ENCODE measurements at regions of chr1 and their contacts with region 1.

Region 1: GRCh38 chr1:156652131-156652991 is 10.4 kb downstream of the BCAN start:
- DNase-seq: peak; percentile 22
- H3K4me3 ChIP-seq: no peak overlapping the region
- H3K27ac ChIP-seq: no peak overlapping the region
- H3K4me1 ChIP-seq: peaks cover 4% of the 10 kb centered on the region
- H3K27me3 ChIP-seq: no peaks in the 10 kb centered on the region
- CTCF ChIP-seq: no peak

Region 2: DNA sequence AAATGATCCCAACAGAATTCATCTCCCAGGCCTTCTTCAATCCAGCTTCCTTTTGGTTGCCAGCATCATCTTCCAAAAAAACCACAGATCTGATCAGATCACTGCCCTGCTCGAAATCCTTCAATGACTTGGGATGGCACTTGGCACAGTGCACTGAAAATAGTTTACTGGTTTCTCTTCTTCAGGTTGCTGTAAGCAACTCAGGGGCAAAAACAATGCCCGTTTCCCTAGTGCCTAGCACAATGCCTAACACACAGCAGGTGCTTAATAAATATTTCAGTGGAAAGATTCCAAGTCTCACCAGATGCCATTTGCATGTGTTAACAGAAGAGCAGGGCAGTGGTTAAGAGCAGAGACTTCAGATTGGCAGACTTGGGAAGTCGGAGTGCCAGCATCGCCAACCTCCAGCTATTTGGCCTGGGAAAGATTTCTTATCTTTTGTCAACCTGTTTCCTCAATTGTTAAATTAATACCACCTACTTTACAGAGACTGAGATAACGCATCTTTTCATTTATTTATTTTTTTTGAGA is 65.0 kb after region 1 on chr1:
- CTCF ChIA-PET with region 1: no interaction called
- dilution Hi-C with region 1: loop called (anchors 5 kb)
- in situ Hi-C with region 1: no loop called
- intact Hi-C with region 1: no loop called
- DNase-seq: no peak
- H3K4me3 ChIP-seq: no peak overlapping the region
- H3K27ac ChIP-seq: no peak overlapping the region
- H3K4me1 ChIP-seq: peaks cover 3% of the 10 kb centered on the region
- H3K27me3 ChIP-seq: no peaks in the 10 kb centered on the region
- CTCF ChIP-seq: no peak

Region 3: GRCh38 chr1:156927215-156928042 is 275.1 kb after region 1 on chr1:
- CTCF ChIA-PET with region 1: no interaction called
- dilution Hi-C with region 1: no loop called
- in situ Hi-C with region 1: no loop called
- intact Hi-C with region 1: no loop called
- DNase-seq: peak; percentile 72
- H3K4me3 ChIP-seq: peak overlapping the region in 2 of 3 experiments; percentile 36 to 49
- H3K27ac ChIP-seq: no peak overlapping the region
- H3K4me1 ChIP-seq: peaks cover 17% of the 10 kb centered on the region
- H3K27me3 ChIP-seq: peaks cover 33% of the 10 kb centered on the region
- CTCF ChIP-seq: peak; percentile 69 to 89

Measured in mammary epithelial cell (primary cell).